PC-3 (cell line): ENCODE measurements at regions of chr11 and their contacts with region 1.

Region 1: DNA sequence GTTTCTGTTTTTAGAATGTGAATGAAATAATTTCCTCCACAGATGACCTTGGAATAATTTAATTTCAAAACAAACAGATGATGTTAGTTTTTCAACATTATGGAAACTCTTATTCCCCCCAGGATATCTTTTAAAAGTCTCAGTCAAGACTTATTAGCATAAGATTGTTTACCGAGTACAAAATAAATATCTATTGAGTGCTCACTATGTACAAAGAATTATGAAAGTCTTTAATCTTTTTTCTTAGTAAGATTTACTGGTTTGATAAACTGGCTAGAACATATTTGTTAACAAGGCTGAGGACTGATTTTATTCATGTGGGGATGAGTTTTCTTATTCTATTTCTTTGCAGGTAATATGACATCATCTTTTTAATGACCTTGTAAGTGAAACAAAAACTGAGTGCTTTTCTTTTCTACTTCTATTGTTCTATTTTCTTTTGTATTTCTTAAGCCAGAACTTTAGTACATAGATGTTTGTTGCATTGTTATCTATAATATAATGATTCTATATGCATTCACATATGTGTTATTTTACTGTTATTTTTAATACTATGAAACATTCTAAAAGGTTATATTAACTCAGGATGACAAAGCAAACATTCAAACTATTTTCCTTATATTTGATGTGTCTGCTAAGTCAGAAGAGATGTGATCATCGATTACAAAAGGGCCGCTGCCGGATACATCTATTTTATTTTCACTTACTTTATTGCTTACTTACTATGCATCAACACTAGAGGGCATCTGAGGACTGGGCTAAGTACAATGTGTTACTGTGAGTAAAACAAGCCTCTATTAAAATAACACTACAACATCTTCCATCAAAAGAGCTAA is 111.0 kb upstream of the ARHGAP42 start:
- DNase-seq: peak; percentile 78
- ATAC-seq: peak; percentile 61
- H3K4me3 ChIP-seq: peak overlapping the region; percentile 25; the same call in 1 of the 2 replicates
- H3K27ac ChIP-seq: no peak overlapping the region
- H3K4me1 ChIP-seq: peaks cover 31% of the 10 kb centered on the region
- H3K27me3 ChIP-seq: no peaks in the 10 kb centered on the region
- CTCF ChIP-seq: peak; percentile 97

Region 2: GRCh38 chr11:99739464-99740089 is 836.5 kb before region 1 on chr11:
- CTCF ChIA-PET with region 1: no interaction called
- POLR2A ChIA-PET with region 1: no interaction called
- intact Hi-C with region 1: loop called (anchors 5 kb)
- DNase-seq: peak; percentile 76
- ATAC-seq: peak; percentile 56; the same call in 1 of the 2 replicates
- H3K4me3 ChIP-seq: no peak overlapping the region
- H3K27ac ChIP-seq: no peak overlapping the region
- H3K4me1 ChIP-seq: no peaks in the 10 kb centered on the region
- H3K27me3 ChIP-seq: peaks cover 23% of the 10 kb centered on the region
- CTCF ChIP-seq: peak; percentile 90

Region 3: DNA sequence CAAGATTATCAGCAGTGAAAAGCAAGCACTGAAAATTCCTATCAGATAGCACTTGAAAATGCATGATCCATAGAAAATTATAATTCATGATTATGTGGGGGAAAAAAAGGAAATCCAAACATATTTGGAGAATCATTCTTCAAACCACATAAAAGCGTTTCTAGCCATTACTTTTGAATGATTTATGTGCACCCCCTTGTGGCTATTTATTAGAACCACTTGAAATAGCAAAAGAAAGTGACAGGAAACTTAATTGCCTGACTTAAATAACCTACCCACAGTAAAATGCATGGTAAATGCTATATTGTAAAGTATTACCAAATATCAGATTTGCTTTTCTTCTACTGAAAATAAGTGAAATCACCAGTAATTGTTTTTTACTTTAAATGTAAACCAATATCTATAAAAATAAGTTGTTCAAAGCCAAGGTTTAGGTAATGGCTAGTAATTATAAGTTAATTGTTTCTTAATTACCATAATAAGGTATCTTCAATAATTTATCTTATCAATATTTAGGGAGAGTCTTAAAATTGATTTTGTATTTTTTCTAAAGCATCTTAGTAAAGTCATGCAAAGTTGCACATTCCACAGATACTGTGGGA is 279.5 kb after region 1 on chr11:
- CTCF ChIA-PET with region 1: no interaction called
- POLR2A ChIA-PET with region 1: no interaction called
- intact Hi-C with region 1: loop called (anchors 1 kb)
- DNase-seq: peak; percentile 86
- ATAC-seq: peak; percentile 25; the same call in 1 of the 2 replicates
- H3K4me3 ChIP-seq: no peak overlapping the region
- H3K27ac ChIP-seq: peak overlapping the region; percentile 20
- H3K4me1 ChIP-seq: peaks cover 18% of the 10 kb centered on the region
- H3K27me3 ChIP-seq: no peaks in the 10 kb centered on the region
- CTCF ChIP-seq: peak; percentile 89

Region 4: DNA sequence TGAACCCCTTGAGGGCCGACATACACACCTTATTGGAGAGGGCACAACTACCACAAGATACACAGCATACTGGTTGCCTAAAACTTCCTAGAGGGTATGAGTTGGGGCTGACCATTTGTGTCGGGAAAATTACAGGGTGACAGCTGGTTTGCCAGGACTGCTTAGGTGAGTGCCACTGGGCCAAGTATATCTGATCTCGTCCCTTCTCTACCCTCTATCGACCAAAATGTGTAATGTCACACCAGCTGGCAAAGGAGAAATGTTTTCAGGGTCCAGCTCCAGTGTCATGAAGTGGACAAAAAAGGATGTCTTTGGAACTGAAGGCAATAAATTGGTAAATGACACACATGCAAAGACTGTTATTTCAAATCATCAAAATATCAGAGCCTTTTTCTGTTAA is 427.4 kb after region 1 on chr11:
- CTCF ChIA-PET with region 1: no interaction called
- POLR2A ChIA-PET with region 1: no interaction called
- intact Hi-C with region 1: loop called (anchors 1 kb)
- DNase-seq: peak; percentile 66
- ATAC-seq: peak; percentile 92
- H3K4me3 ChIP-seq: no peak overlapping the region
- H3K27ac ChIP-seq: no peak overlapping the region
- H3K4me1 ChIP-seq: no peaks in the 10 kb centered on the region
- H3K27me3 ChIP-seq: peaks cover 26% of the 10 kb centered on the region
- CTCF ChIP-seq: peak; percentile 63